ENCODE measurements at regions of chr2 and their contacts with region 1.

Region 1: DNA sequence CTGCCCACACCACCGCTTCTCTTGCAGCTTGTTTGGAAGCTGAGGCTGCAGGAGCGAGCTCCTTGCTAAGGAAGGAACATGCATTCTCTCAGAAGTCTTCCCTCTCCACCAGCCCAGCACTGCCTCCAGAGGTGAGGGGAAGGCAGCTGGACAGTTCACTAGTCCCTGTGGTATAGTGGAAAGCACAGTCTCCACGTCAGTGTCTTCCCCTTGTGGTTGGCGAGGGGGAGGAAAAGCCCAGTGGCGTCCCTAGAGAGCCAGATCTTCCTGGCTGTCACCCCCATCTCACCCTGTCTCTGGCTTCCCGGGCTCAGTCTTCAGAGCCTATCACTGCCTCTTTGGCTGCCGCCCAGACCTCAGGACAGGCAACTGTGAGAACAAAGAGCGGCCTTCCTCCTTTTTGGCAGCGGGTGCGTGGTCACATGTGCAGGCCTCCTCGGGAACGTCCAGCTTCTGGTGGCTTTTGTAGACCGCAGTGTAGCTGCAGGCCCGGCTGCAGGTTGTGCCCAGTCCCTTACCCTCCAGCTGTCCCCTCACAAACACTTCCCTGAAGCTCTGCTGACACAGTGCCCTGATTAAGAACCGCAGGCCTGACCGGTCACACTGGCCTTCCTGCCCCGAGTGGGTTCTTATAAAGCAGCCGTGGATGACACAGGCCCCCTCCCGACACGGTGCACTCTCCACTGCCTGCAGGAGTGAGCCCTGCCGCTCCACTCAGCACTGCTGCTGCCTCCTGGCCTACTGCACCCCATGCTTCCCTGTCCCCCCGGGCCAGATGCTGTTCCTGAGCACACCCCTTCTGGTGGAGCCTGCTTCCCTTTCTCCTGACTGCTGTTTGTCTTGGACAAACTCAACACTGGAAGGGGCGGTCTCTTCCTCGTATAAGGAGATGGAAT is 90.9 kb downstream of the RNF144A start:
- DNase-seq: no peak
- ATAC-seq: no peak
- H3K4me3 Mint-ChIP-seq: no peak overlapping the region
- H3K27ac Mint-ChIP-seq: no peak overlapping the region
- H3K4me1 Mint-ChIP-seq: peaks cover 33% of the 10 kb centered on the region
- H3K27me3 Mint-ChIP-seq: peaks cover 3% of the 10 kb centered on the region
- CTCF ChIP-seq: no peak

Region 2: DNA sequence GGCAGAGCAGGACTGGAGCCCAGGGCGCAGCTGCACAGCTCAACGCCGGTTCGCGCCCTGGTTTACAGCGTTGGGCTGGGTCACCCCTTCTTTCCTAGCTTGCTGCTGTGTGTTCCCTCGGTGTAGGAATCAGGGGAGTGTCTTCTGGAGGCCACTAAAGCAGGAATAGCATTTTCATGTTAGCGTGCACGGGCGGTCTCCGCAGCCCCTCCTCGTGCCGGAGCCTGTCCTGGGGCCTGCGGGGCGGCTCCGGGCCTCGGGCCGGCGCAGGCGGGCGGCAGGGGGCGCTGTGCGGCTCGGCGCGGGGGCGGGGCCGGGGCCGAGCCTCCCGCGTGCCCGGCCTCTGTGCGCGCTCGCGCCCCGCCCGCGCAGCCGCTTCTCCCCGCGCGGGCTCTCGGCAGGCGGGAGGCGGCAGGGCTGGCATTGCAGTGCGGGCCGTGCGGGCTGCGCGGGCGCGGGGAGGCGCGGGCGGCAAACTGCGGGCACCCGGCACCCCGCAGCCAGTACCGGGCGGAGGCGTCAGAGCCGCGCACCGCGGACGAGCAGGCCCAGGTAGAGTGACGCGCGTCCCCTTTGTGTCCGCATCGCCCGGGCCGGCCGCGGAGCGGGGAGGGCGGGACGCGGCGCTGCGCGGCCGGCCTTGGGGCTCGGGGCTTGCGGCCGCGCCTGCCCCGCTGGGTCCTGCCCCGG is 90.9 kb before region 1 on chr2 and contains the start of gene RNF144A:
- CTCF ChIA-PET with region 1: no interaction called
- POLR2A ChIA-PET with region 1: no interaction called
- intact Hi-C with region 1: loop called (anchors 5 kb)
- DNase-seq: peak; percentile 80
- ATAC-seq: peak; percentile 93
- H3K4me3 Mint-ChIP-seq: peak within 1 kb of the TSS; percentile 72
- H3K27ac Mint-ChIP-seq: no peak within 1 kb of the TSS
- H3K4me1 Mint-ChIP-seq: peaks cover 6% of the 10 kb centered on the region
- H3K27me3 Mint-ChIP-seq: peaks cover 9% of the 10 kb centered on the region
- CTCF ChIP-seq: no peak
- total RNA-seq, gene RNF144A: 0.56 and 0.89 TPM in 2 replicates